Activated CD4-positive, alpha-beta memory T cell treated with anti-CD3 and anti-CD28 coated beads for 36 hours (primary cell): ENCODE measurements at regions of chr6 and their contacts with region 1.

Region 1: GRCh38 chr6:57172136-57173055 is at the start of gene BAG2:
- DNase-seq: peak; percentile 92
- H3K4me3 Mint-ChIP-seq: peak within 1 kb of the TSS; percentile 90
- H3K27ac Mint-ChIP-seq: peak within 1 kb of the TSS; percentile 87
- H3K4me1 Mint-ChIP-seq: peaks cover 20% of the 10 kb centered on the region
- H3K27me3 Mint-ChIP-seq: no peaks in the 10 kb centered on the region
- total RNA-seq, gene BAG2: 6.8 to 7.2 TPM

Region 2: DNA sequence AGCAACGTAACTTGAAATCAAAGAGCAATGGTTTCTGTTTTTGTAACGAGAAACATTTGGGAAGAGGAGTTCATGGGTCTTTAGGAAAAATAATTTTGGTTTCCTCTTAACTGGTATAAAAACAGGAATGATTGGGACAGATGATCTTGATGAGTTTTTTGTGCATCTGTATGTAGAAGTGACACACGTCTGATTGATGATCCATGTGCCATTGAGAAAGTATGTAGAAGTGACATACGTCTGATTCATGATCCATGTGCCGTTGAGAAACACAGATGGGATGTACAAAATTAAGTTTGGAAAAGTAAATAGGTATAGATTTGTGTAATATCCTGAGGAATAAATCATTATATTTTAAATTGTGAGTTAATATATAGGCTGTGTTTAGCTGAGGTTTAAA is 123.8 kb before region 1 on chr6:
- CTCF ChIA-PET with region 1: no interaction called
- POLR2A ChIA-PET with region 1: no interaction called
- intact Hi-C with region 1: loop called (anchors 1 kb)
- DNase-seq: no peak
- H3K4me3 Mint-ChIP-seq: peak overlapping the region; percentile 64
- H3K27ac Mint-ChIP-seq: no peak overlapping the region
- H3K4me1 Mint-ChIP-seq: peaks cover 19% of the 10 kb centered on the region
- H3K27me3 Mint-ChIP-seq: peaks cover 10% of the 10 kb centered on the region

Region 3: GRCh38 chr6:57135885-57136284 is 36.5 kb before region 1 on chr6:
- CTCF ChIA-PET with region 1: interaction called, 3 read pairs
- POLR2A ChIA-PET with region 1: no interaction called
- intact Hi-C with region 1: loop called (anchors 5 kb)
- DNase-seq: no peak
- H3K4me3 Mint-ChIP-seq: no peak overlapping the region
- H3K27ac Mint-ChIP-seq: no peak overlapping the region
- H3K4me1 Mint-ChIP-seq: peaks cover 7% of the 10 kb centered on the region
- H3K27me3 Mint-ChIP-seq: no peaks in the 10 kb centered on the region

Region 4: GRCh38 chr6:57221936-57222742 is 49.7 kb after region 1 on chr6 and contains the start of gene RAB23:
- CTCF ChIA-PET with region 1: interaction called, 5 read pairs
- POLR2A ChIA-PET with region 1: interaction called, 9 read pairs
- intact Hi-C with region 1: loop called (anchors 1 kb)
- DNase-seq: peak; percentile 85
- H3K4me3 Mint-ChIP-seq: peak within 1 kb of the TSS; percentile 98
- H3K27ac Mint-ChIP-seq: peak within 1 kb of the TSS; percentile 77
- H3K4me1 Mint-ChIP-seq: peaks cover 10% of the 10 kb centered on the region
- H3K27me3 Mint-ChIP-seq: peaks cover 16% of the 10 kb centered on the region
- total RNA-seq, gene RAB23: 1.7 to 2.2 TPM